Head of caudate nucleus (tissue), 42 donors: ENCODE measurements at regions of chr7 and their contacts with region 1.

Region 1: DNA sequence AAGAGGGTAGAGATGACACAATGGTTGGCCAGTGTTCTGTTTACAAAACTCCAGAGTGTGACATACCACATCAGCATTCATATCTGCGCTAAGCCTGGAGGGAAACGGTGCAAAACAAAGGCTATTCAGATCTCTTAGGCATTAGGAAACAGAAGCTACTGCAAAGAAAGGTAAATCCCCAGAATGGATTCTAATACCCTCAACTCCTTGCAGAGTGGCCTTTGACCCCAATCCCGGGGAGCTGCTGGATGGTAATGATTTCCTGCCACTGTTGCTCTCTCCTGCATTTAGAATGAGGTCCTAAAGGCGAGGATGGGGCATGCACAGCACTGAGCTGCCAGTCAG is 65.2 kb downstream of the AOAH start:
- DNase-seq: no peak

Region 2: DNA sequence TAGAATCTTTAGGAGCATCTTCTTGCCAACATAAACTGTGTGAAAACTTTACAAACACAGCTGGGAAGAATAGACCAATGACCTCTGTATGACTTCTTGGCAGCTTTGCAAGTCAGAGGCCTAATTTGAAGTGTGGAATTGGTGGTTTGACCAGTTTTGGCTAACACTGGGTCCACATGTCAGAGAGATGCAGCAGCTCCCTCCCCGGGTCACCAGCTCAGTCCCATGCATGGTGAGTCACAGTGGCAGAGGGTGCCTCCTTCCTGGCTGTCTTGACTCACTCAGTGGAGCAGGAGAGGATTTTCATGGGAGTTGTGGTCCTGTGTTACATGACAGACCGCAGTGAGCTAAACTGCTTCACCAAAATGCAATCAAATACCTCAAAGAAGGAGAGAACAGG is 1510.7 kb after region 1 on chr7:
- intact Hi-C with region 1: loop called (anchors 10 kb)
- DNase-seq: peak in 1 of 42 donors; percentile 14